Mucosa of descending colon (tissue), 3 donors: ENCODE measurements at regions of chr5 and their contacts with region 1.

Region 1: DNA sequence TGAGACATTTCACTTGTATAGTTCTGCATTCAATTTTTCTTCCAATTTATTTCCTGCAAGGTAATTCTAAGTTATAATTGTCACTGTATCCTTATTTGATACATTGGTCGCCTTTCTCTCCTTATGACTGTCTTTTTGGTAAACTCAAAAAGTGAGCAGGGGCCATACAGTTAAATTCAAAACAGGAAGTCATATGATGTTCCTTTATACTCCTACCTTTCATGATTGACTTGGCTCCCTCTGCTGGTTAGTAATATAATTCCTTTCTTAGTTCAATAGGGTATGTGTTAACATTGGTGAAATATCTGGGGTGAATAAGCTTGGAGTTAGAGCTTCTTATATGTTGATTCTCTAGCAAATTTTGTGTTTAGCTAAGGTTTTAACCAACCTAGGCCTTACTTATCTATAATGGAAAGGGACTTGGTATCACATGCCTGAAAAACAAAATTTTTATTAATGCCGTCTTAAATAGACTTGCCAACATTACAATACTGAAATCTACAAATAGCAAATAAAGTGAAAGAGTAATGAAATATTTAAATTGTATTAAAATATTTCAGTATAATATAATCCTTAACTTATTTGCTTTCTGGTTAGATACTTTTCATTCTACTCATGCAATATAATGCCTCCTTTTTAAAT is 6.0 kb upstream of the NIPBL start:
- DNase-seq: no peak
- ATAC-seq: peak; percentile 88
- H3K4me3 ChIP-seq: no peak overlapping the region
- H3K4me1 ChIP-seq: peaks cover 7% of the 10 kb centered on the region
- CTCF ChIP-seq: peak; percentile 10

Region 2: GRCh38 chr5:36739751-36740221 is 130.7 kb before region 1 on chr5:
- intact Hi-C with region 1: loop called in 1 of 2 experiments (anchors 5 kb)
- DNase-seq: peak; percentile 55 to 95 (median 83)
- ATAC-seq: peak; percentile 75
- H3K4me3 ChIP-seq: no peak overlapping the region
- H3K4me1 ChIP-seq: peaks cover 8% of the 10 kb centered on the region
- CTCF ChIP-seq: peak; percentile 86